Activated CD8-positive, alpha-beta T cell treated with anti-CD3 and anti-CD28 coated beads, Interleukin-2, amount 10 ng/mL, durations not matched to agents 7 days and 5 days (primary cell): ENCODE measurements at regions of chr19 and their contacts with region 1.

Region 1: GRCh38 chr19:17390665-17391370 is 3.2 kb downstream of the CCDC194 start:
- DNase-seq: peak; percentile 91
- ATAC-seq: peak; percentile 98
- H3K4me3 Mint-ChIP-seq: peak overlapping the region; percentile 79
- H3K27ac Mint-ChIP-seq: no peak overlapping the region
- H3K4me1 Mint-ChIP-seq: peaks cover 32% of the 10 kb centered on the region
- H3K27me3 Mint-ChIP-seq: peaks cover 15% of the 10 kb centered on the region

Region 2: GRCh38 chr19:17226002-17226933 is 164.6 kb before region 1 on chr19 and contains the start of gene OCEL1:
- CTCF ChIA-PET with region 1: no interaction called
- POLR2A ChIA-PET with region 1: no interaction called
- DNase-seq: peak; percentile 98
- ATAC-seq: peak; percentile 95
- H3K4me3 Mint-ChIP-seq: peak within 1 kb of the TSS; percentile 82
- H3K27ac Mint-ChIP-seq: peak within 1 kb of the TSS; percentile 96
- H3K4me1 Mint-ChIP-seq: peaks cover 8% of the 10 kb centered on the region
- H3K27me3 Mint-ChIP-seq: no peaks in the 10 kb centered on the region
- total RNA-seq, gene OCEL1: 24.3 to 28.3 TPM

Region 3: DNA sequence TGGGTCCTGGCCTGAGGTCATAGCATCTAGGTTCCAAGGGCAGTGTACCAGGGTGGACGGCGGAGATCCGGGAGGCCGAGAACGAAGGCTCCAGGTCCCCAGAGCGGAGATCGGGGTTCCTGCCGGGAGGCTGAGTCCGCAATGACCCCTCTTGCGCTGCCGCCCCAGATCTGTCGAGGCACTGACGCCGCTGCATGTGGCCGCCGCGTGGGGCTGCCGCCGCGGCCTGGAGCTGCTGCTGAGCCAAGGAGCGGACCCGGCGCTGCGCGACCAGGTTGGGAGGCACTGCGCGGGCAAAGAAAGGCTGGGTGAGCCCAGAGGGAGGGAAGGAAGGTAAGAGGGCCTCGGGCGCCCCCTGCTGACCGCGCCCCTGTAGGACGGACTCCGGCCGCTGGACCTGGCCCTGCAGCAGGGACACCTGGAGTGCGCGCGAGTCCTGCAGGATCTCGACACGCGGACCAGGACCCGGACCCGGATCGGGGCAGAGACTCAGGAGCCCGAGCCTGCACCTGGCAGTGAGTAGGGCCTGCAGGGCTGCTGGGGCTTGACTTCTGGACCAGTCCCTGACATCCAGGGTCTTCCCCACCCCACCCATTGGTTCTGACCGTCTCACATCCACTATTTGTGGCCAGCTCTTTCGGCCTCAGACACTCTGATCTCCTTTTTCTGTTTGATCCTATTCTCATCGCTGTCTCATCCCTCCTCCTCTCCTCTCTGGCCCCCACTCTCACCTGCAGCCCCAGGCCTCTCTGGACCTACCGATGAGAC is 108.1 kb before region 1 on chr19:
- CTCF ChIA-PET with region 1: interaction called, 10 read pairs
- POLR2A ChIA-PET with region 1: no interaction called
- DNase-seq: peak; percentile 87
- ATAC-seq: peak; percentile 93
- H3K4me3 Mint-ChIP-seq: peak overlapping the region; percentile 88
- H3K27ac Mint-ChIP-seq: peak overlapping the region; percentile 79
- H3K4me1 Mint-ChIP-seq: peaks cover 20% of the 10 kb centered on the region
- H3K27me3 Mint-ChIP-seq: no peaks in the 10 kb centered on the region

Region 4: DNA sequence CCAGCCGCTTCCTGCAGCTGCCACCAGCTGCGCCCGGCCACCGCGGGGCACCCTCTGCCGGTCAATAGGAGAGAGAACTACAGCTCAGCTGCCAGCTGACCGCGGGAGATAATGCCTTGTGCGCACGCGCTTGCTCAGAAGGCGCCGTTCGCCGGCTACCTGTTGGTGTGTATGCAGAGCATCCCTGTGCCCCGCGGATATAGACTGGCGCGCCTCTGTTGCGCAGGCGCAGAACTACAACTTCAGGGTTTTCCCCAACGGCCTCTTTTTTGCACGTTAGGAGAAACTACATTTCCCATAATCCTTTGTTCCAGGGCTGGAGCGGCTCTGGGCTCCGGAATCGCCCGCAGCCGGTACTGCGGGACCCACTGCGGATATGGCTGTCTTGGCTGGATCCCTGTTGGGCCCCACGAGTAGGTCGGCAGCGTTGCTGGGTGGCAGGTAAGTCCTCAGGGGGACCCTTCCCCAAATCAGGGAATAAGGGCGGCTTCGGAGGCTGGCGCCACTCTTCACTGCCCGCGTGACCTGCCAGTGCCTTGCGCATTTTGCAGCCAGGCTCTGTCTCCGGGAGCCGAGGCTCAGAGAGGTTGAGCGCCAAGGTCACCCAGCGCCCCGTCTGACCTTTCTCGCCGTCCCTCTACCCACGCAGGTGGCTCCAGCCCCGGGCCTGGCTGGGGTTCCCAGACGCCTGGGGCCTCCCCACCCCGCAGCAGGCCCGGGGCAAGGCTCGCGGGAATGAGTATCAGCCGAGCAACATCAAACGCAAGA is 85.1 kb before region 1 on chr19 and contains the start of gene MRPL34:
- CTCF ChIA-PET with region 1: interaction called, 13 read pairs
- POLR2A ChIA-PET with region 1: interaction called, 4 read pairs
- DNase-seq: peak; percentile 98
- ATAC-seq: peak; percentile 72
- H3K4me3 Mint-ChIP-seq: peak within 1 kb of the TSS; percentile 90
- H3K27ac Mint-ChIP-seq: peak within 1 kb of the TSS; percentile 92
- H3K4me1 Mint-ChIP-seq: peaks cover 61% of the 10 kb centered on the region
- H3K27me3 Mint-ChIP-seq: no peaks in the 10 kb centered on the region
- total RNA-seq, gene MRPL34: 112 to 126 TPM

Region 5: DNA sequence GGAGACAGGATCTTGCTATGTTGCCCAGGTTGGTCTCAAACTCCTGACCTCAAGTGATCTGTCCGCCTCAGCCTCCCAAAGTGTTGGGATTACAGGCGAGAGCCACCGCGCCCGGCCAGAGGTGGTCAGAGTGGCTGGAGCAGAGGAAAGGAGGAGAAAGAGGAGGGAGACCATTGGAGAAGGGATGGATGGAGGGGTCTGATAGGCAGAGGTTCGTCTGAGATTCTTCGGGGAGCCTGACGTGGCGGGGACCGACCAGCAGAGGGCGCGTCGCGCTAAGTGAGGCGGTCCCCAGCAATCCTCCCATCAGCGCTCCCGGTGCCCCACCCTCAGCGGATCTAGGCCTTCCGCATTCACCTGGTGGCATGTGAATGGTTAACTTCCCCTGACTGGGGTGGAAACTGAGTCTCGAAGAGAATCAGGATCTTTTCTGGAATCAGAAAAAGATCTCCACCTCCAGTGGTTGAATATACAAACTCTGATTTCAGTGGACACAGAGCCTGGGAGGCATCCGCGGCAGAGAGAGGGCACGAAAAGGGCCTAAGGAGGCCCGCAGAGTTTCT is 44.6 kb before region 1 on chr19:
- CTCF ChIA-PET with region 1: interaction called, 30 read pairs
- POLR2A ChIA-PET with region 1: no interaction called
- DNase-seq: peak; percentile 84
- ATAC-seq: peak; percentile 95
- H3K4me3 Mint-ChIP-seq: no peak overlapping the region
- H3K27ac Mint-ChIP-seq: no peak overlapping the region
- H3K4me1 Mint-ChIP-seq: peaks cover 29% of the 10 kb centered on the region
- H3K27me3 Mint-ChIP-seq: peaks cover 13% of the 10 kb centered on the region

Region 6: GRCh38 chr19:17405250-17406038 is 14.6 kb after region 1 on chr19 and contains the start of gene BST2:
- CTCF ChIA-PET with region 1: interaction called, 14 read pairs
- POLR2A ChIA-PET with region 1: interaction called, 16 read pairs
- DNase-seq: peak; percentile 78
- ATAC-seq: peak; percentile 82
- H3K4me3 Mint-ChIP-seq: peak within 1 kb of the TSS; percentile 86
- H3K27ac Mint-ChIP-seq: peak within 1 kb of the TSS; percentile 97
- H3K4me1 Mint-ChIP-seq: peaks cover 42% of the 10 kb centered on the region
- H3K27me3 Mint-ChIP-seq: no peaks in the 10 kb centered on the region
- total RNA-seq, gene BST2: 222 to 230 TPM